Endothelial cell of umbilical vein (primary cell): ENCODE measurements at regions of chr14 and their contacts with region 1.

Region 1: DNA sequence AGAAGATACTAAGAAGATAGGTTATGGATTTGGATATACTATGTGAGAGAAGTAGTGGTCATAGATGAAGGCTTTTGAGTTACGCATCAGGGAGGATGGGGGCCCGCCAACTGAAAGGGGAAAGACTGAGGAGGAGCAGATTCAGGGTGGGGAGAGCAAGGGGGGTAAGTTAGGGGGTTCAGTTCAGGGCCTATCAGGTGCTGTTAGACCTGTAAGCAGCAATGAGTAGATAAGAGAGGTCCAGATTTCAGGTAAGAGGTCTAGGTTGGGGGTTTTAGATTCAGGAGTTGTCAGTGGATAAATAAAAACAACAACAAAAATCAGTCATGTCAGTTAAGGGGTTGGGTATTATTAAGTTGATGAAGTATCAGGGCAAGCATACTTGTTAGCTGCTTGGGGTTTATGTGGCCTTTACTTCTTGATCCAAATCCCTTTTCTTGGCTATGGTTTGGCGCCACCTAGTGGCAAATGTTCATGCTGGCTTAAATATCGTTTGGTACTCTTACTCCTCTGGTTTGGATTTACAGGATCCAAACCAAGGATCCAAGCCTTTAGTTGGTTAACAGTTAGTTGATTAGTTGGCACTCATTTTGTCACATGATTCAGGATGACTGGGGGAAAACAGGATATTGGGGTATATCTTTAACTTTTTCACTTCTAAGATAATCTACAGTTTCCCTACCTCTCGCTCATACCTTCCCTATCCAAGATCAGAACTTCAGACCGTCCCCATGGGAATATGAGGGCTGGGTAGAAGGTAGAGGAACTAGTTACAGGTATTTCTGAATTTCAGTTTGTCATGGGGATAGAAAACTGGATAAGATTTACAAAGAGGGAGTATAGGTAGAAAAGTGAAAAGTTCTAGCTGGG is 65.1 kb downstream of the PCNX1 start:
- DNase-seq: peak; percentile 83
- H3K4me3 ChIP-seq: no peak overlapping the region
- H3K27ac ChIP-seq: no peak overlapping the region
- H3K4me1 ChIP-seq: no peaks in the 10 kb centered on the region
- H3K27me3 ChIP-seq: no peaks in the 10 kb centered on the region
- CTCF ChIP-seq: peak; percentile 81 to 90
- POLR2A ChIP-seq: no peak

Region 2: DNA sequence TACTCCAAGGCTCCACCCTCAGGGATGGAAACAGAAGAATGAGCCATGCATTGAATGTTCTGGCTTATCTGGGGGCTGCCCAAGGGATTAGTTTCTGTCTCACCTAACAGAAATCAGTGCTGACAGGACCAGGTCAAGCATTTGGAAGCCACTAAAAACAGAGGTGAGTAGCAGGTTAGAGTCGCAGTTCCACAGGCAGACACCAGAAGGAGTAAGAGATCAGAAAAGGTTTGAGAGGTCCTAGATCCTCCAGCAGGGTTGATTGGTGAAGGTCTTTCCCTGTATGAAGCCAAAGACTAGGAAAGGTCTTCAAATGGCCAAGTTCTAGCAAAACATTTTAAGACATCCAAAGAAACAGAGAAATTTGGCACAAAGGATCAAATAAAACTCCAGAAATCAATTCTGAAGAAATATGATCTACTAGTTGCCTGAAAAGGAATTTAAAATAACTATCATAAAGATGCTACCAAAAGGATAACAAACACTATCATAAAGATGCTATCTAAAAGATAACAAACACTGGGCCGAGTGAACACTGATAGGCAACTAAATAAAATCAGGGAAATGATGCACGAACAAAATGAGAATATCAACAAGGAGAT is 350.1 kb before region 1 on chr14:
- CTCF ChIA-PET with region 1: interaction called, 8 read pairs
- POLR2A ChIA-PET with region 1: no interaction called
- dilution Hi-C with region 1: no loop called
- intact Hi-C with region 1: loop called (anchors 1 kb)
- DNase-seq: peak; percentile 45
- H3K4me3 ChIP-seq: no peak overlapping the region
- H3K27ac ChIP-seq: no peak overlapping the region
- H3K4me1 ChIP-seq: no peaks in the 10 kb centered on the region
- H3K27me3 ChIP-seq: peaks cover 0 to 3% of the 10 kb centered on the region in 2 experiments
- CTCF ChIP-seq: peak; percentile 40 to 55
- POLR2A ChIP-seq: no peak

Region 3: GRCh38 chr14:70714055-70714621 is 258.2 kb before region 1 on chr14:
- CTCF ChIA-PET with region 1: no interaction called
- POLR2A ChIA-PET with region 1: no interaction called
- dilution Hi-C with region 1: no loop called
- intact Hi-C with region 1: loop called (anchors 1 kb)
- DNase-seq: peak; percentile 67
- H3K4me3 ChIP-seq: no peak overlapping the region
- H3K27ac ChIP-seq: no peak overlapping the region
- H3K4me1 ChIP-seq: no peaks in the 10 kb centered on the region
- H3K27me3 ChIP-seq: peaks cover 3 to 14% of the 10 kb centered on the region in 2 experiments
- CTCF ChIP-seq: peak; percentile 33 to 46
- POLR2A ChIP-seq: no peak

Region 4: DNA sequence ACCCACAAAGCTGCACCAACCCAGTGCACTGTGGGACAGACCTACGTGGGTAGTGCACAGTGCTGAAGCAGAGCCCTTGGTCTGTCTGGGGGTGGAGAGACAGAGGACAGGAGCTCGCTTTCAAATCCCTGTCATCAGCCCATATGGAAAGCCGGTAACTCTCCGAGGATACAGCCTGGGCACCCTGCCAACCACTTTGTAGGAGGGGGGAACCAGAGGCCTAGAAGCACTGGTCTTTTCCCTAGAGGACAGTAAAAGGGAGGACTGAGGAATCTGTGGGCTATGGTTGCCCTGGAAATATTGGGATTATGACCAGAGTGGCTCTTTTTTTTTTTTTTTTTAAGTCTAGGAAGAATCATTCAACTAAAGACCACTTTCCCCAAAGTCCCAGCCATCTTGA is 237.3 kb before region 1 on chr14:
- CTCF ChIA-PET with region 1: no interaction called
- POLR2A ChIA-PET with region 1: no interaction called
- dilution Hi-C with region 1: no loop called
- intact Hi-C with region 1: no loop called
- DNase-seq: no peak
- H3K4me3 ChIP-seq: no peak overlapping the region
- H3K27ac ChIP-seq: no peak overlapping the region
- H3K4me1 ChIP-seq: no peaks in the 10 kb centered on the region
- H3K27me3 ChIP-seq: no peaks in the 10 kb centered on the region
- CTCF ChIP-seq: no peak
- POLR2A ChIP-seq: no peak

Region 5: GRCh38 chr14:70816525-70816924 is 155.8 kb before region 1 on chr14:
- CTCF ChIA-PET with region 1: interaction called, 35 read pairs
- POLR2A ChIA-PET with region 1: no interaction called
- dilution Hi-C with region 1: no loop called
- intact Hi-C with region 1: loop called (anchors 1 kb)
- DNase-seq: no peak
- H3K4me3 ChIP-seq: no peak overlapping the region
- H3K27ac ChIP-seq: no peak overlapping the region
- H3K4me1 ChIP-seq: no peaks in the 10 kb centered on the region
- H3K27me3 ChIP-seq: peaks cover 28 to 33% of the 10 kb centered on the region in 2 experiments
- CTCF ChIP-seq: no peak
- POLR2A ChIP-seq: no peak

Region 6: GRCh38 chr14:70821584-70822529 is 150.5 kb before region 1 on chr14:
- CTCF ChIA-PET with region 1: interaction called, 35 read pairs
- POLR2A ChIA-PET with region 1: no interaction called
- dilution Hi-C with region 1: no loop called
- intact Hi-C with region 1: loop called (anchors 1 kb)
- DNase-seq: peak; percentile 15
- H3K4me3 ChIP-seq: peak overlapping the region; percentile 25 to 57 (median 47)
- H3K27ac ChIP-seq: no peak overlapping the region
- H3K4me1 ChIP-seq: no peaks in the 10 kb centered on the region
- H3K27me3 ChIP-seq: peaks cover 37 to 45% of the 10 kb centered on the region in 2 experiments
- CTCF ChIP-seq: no peak
- POLR2A ChIP-seq: no peak

Region 7: GRCh38 chr14:70873627-70874026 is 98.7 kb before region 1 on chr14:
- CTCF ChIA-PET with region 1: interaction called, 10 read pairs
- POLR2A ChIA-PET with region 1: no interaction called
- dilution Hi-C with region 1: no loop called
- intact Hi-C with region 1: no loop called
- DNase-seq: no peak
- H3K4me3 ChIP-seq: no peak overlapping the region
- H3K27ac ChIP-seq: no peak overlapping the region
- H3K4me1 ChIP-seq: no peaks in the 10 kb centered on the region
- H3K27me3 ChIP-seq: peaks cover 8 to 12% of the 10 kb centered on the region in 2 experiments
- CTCF ChIP-seq: no peak
- POLR2A ChIP-seq: no peak

Region 8: DNA sequence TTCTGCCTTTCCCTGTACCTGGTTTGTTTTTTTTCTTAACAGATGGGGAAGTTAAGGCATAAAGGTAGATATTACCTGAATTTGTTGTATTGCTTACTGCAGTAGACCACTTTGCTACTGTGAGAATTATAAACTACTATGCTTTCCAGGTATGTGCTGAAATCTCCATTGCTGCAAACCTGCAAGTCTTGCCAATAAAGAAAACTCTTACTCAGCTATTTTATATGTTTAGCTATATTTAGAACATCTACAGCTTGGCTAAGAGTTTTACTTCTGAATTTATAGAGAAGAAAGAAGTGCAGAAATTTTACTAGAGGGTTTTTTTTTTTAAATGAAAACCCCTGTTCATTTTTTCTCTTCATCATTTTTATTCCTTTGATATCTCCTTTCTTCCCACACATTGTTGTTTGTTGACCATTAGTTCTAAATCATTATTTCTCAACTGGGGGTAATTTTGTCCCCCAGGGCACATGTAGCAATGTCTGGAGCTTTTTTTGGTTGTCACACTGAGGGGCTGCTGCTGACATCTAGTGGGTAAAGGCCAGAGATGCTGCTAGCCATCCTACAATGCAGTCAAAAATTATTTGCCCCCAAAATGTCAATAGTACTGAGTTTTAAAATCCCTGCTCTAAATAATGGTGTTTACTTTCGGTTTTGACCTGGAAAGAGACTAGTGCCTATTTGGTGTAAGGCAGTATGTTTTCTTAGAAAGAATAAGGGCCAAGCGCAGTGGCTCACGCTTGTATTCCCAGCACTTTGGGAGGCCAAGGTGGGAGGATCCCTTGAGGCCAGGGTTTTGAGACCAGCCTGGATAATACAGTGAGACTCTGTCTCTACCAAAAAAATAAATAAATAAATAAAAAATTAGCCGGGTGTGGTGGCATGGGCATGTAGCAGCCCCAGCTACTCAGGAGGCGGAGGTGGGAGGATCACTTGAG is 16.5 kb before region 1 on chr14:
- CTCF ChIA-PET with region 1: interaction called, 20 read pairs
- POLR2A ChIA-PET with region 1: no interaction called
- dilution Hi-C with region 1: no loop called
- intact Hi-C with region 1: no loop called
- DNase-seq: peak; percentile 41
- H3K4me3 ChIP-seq: no peak overlapping the region
- H3K27ac ChIP-seq: no peak overlapping the region
- H3K4me1 ChIP-seq: no peaks in the 10 kb centered on the region
- H3K27me3 ChIP-seq: no peaks in the 10 kb centered on the region
- CTCF ChIP-seq: peak; percentile 49 to 64
- POLR2A ChIP-seq: no peak